Transverse colon (tissue), 4 donors: ENCODE measurements at regions of chr2 and their contacts with region 1.

Region 1: GRCh38 chr2:208477741-208478140 is 71.1 kb downstream of the PTH2R start:
- DNase-seq: no peak
- H3K4me3 ChIP-seq: no peak overlapping the region
- H3K27ac ChIP-seq: no peak overlapping the region
- H3K4me1 ChIP-seq: no peaks in the 10 kb centered on the region
- H3K27me3 ChIP-seq: no peaks in the 10 kb centered on the region
- CTCF ChIP-seq: no peak
- EP300 ChIP-seq: no peak
- POLR2A ChIP-seq: no peak

Region 2: GRCh38 chr2:207762146-207762545 is 715.6 kb before region 1 on chr2:
- in situ Hi-C with region 1: no loop called
- intact Hi-C with region 1: no loop called
- DNase-seq: no peak
- H3K4me3 ChIP-seq: no peak overlapping the region
- H3K27ac ChIP-seq: no peak overlapping the region
- H3K4me1 ChIP-seq: peaks cover 0 to 62% (median 42%) of the 10 kb centered on the region in 4 donors
- H3K27me3 ChIP-seq: no peaks in the 10 kb centered on the region
- CTCF ChIP-seq: no peak
- EP300 ChIP-seq: no peak
- POLR2A ChIP-seq: no peak

Region 3: DNA sequence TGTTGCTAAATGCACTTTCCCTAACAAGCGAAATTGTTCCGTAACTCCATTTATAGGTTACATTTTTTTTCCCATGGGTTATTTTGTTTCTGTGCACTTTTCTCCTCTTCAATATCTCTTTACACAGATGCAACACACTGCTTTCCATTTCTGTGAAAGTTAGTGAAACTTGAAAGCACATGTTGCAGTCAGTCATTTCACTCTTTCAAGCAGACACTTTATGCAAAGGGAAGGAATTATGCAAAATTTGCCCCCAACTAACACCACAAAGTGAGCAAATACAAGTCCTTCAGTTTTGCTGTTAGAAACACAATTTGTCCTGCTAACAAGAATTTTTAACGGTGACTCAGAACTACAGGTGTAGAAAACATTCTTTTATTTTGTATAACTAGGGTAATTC is 53.6 kb after region 1 on chr2:
- in situ Hi-C with region 1: no loop called
- intact Hi-C with region 1: loop called (anchors 2 kb)
- DNase-seq: no peak
- H3K4me3 ChIP-seq: no peak overlapping the region
- H3K27ac ChIP-seq: no peak overlapping the region
- H3K4me1 ChIP-seq: no peaks in the 10 kb centered on the region
- H3K27me3 ChIP-seq: no peaks in the 10 kb centered on the region
- CTCF ChIP-seq: no peak
- EP300 ChIP-seq: no peak
- POLR2A ChIP-seq: no peak